ENCODE measurements at regions of chr10 and their contacts with region 1.

Region 1: DNA sequence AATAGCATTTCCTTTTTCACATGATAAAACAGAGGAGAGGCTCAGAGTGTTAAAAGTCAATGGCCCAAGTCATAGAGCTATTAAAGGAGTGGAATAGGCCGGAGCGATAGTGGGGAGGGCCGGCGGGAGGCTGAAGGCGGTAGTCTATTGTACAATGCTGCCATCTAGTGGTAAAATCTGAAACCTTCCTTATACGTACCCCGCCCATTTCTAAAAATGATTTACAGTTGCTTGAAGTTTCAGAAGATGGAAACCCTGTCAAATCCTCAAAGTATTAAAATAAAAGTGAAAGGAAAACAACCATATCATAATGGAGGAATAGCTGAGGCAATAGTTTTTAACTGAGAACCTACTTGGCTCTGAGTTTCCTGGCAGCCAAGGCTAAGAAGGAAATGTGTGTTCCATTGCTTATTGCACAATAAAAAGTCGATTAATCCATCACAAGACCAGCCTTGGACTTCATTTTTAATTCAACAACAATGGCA is 209.1 kb downstream of the CCSER2 start:
- DNase-seq: peak; percentile 81
- H3K4me3 Mint-ChIP-seq: no peak overlapping the region
- H3K27ac Mint-ChIP-seq: no peak overlapping the region
- H3K4me1 Mint-ChIP-seq: peaks cover 20% of the 10 kb centered on the region
- H3K27me3 Mint-ChIP-seq: peaks cover 20% of the 10 kb centered on the region

Region 2: DNA sequence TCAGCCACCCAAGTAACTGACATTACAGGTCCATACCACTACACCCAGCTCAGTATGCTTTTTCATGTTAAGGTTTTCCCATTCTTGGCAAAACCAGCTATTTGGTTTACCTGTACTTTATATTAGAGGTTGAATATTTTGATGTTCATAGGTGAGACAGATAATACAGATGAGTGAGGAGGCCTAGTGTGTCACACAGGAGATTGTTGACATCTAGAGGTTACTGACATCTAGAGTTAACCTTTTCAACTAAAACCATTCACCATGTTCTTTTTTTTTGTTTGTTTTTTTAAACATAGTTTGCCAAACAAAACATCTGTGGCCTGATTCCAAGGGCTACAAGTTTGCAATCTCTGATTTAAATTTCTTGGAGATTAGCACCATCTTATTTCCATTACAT is 390.1 kb before region 1 on chr10:
- intact Hi-C with region 1: loop called (anchors 5 kb)
- DNase-seq: no peak
- H3K4me3 Mint-ChIP-seq: no peak overlapping the region
- H3K27ac Mint-ChIP-seq: no peak overlapping the region
- H3K4me1 Mint-ChIP-seq: no peaks in the 10 kb centered on the region
- H3K27me3 Mint-ChIP-seq: no peaks in the 10 kb centered on the region

Region 3: DNA sequence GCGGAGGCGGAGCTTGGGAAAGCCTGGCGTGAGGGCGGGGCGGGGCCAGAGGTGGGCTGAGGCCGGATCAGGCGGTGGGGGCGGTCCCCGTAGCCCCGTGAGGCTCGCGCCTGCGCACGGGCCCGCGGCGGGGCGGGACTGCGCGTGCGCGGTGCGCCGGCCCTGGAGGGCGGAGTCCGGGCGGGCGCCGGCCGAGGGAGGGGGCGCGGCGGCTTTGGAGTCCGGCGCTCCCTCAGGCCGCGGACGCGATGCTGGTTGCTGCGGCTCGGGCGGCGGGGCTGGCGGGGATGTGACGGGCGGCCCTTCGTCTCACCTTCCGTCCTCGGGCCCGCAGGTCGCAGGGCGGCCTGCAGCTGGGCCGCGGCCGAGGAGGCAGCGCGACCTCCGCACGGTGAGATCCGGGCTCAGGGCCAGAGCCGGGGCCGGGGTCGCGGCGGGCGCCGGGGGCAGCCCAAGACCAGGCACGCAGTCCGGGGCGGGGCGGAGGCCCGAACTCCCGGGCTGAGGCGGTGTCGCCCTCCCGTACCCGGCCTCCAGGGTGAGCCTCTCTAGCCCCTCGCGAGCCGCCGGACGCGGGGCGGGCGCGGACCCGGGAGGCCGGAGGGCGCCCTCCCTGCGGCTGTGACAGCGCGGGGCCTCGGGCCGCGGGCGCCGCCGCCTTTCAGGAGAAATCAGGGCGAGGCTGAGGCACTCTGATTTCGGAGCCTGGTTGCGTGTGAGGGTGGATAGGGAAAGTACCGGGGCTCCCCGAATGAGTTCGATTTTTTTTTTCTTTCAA is 208.9 kb before region 1 on chr10 and contains the start of gene CCSER2:
- intact Hi-C with region 1: no loop called
- DNase-seq: peak; percentile 98
- H3K4me3 Mint-ChIP-seq: peak within 1 kb of the TSS; percentile 95
- H3K27ac Mint-ChIP-seq: peak within 1 kb of the TSS; percentile 94
- H3K4me1 Mint-ChIP-seq: peaks cover 35% of the 10 kb centered on the region
- H3K27me3 Mint-ChIP-seq: peaks cover 5% of the 10 kb centered on the region
- total RNA-seq, gene CCSER2: 42.9 and 45.6 TPM in 2 replicates

Region 4: GRCh38 chr10:84352251-84352842 is 185.1 kb before region 1 on chr10:
- intact Hi-C with region 1: loop called (anchors 1 kb)
- DNase-seq: peak; percentile 88
- H3K4me3 Mint-ChIP-seq: no peak overlapping the region
- H3K27ac Mint-ChIP-seq: no peak overlapping the region
- H3K4me1 Mint-ChIP-seq: peaks cover 37% of the 10 kb centered on the region
- H3K27me3 Mint-ChIP-seq: no peaks in the 10 kb centered on the region

Region 5: DNA sequence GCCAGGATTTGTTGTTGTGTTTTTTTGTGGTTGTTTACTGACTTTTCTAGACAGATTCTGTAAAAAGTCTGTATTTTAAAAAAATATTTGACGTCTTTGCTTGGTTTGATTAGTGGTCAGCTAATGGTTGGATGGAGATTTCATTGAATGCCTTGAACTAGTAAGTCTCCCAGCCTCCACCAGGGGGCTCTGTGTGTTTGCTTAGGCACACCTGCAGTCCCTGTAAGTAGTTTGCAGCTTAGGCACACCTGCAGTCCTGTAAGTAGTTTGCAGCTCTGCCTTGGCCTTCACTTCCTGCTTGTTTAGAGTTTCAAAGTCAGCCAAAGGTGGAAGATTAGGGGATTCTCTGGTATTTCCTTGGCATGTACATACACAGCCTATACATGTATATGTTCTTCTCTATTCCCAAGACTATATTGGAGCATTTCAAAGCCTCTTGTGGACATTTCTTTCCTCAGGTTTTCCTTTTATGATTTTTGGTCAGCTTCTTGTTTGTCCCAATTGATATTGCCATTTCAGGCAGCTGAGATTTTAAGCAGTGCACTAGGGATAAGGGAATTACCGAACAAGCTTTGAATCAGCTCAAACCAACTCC is 107.5 kb before region 1 on chr10:
- intact Hi-C with region 1: loop called (anchors 1 kb)
- DNase-seq: peak; percentile 87
- H3K4me3 Mint-ChIP-seq: no peak overlapping the region
- H3K27ac Mint-ChIP-seq: no peak overlapping the region
- H3K4me1 Mint-ChIP-seq: peaks cover 12% of the 10 kb centered on the region
- H3K27me3 Mint-ChIP-seq: no peaks in the 10 kb centered on the region

Region 6: DNA sequence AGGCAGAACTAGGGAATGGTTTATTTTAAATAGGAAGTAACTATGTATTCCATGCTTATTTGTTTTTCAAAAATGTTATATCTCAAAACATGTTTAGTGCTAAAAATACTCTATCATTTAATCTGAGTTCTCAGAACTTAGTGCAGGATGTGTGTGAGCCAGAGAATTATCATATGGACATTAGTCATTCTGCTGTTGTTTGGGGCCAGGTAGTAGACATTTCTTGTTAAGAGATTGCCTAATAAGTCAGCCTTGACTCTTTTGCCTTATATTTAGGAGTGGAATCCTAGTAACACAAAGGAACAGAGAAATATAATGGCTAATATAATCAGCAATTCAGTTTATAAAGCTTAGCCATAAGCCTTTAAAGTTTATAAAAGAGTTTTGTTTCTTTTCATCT is 59.3 kb before region 1 on chr10:
- intact Hi-C with region 1: no loop called
- DNase-seq: no peak
- H3K4me3 Mint-ChIP-seq: no peak overlapping the region
- H3K27ac Mint-ChIP-seq: no peak overlapping the region
- H3K4me1 Mint-ChIP-seq: peaks cover 2% of the 10 kb centered on the region
- H3K27me3 Mint-ChIP-seq: no peaks in the 10 kb centered on the region

Region 7: DNA sequence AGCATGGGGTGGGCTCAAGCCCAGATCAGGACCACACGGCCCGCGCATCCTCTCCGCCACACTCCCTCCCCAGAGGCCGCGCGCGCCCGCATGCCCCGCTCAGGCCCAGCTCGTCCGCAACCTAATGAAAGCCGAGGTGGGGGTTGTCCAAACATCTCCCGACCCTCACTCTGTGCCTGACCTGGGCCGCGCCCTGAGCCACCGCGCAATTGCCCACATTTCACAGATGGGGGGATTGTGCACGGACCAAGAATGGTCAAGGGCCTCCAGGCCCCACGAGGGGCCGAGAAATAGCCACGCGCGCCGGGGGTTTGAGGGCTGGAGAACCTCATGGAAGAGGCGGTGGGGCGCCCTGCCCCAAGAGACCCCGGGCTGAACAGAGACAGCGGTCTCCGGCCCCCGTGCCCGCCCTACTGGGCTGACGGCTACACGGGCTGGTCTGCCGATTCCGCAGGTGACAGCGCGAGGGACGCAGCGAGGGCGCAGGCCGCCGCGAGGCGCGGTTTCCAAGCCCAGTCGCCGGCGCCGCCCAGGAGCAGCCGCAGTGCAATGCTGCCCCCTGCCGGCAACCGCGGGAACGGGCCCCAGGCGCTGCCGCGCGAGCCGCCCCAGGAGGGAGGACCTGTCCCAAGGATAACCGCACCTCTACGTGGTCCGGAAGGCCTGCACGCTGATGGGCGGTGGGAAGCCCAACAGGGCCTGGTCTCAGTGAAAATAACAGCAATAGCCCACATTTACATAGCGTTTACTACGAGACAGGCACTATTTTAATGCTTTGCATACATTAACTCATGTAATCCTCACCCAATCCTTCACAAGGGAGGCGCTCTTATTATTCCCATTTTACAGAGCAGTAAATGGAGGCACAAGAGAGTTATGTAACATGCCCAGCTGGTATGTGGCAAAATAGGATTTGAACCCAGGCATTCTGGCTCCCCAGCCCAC is 1839.6 kb after region 1 on chr10:
- intact Hi-C with region 1: loop called (anchors 5 kb)
- DNase-seq: peak; percentile 95
- H3K4me3 Mint-ChIP-seq: no peak overlapping the region
- H3K27ac Mint-ChIP-seq: no peak overlapping the region
- H3K4me1 Mint-ChIP-seq: peaks cover 2% of the 10 kb centered on the region
- H3K27me3 Mint-ChIP-seq: peaks cover 46% of the 10 kb centered on the region